Activated CD8-positive, alpha-beta T cell treated with anti-CD3 and anti-CD28 coated beads for 36 hours (primary cell): ENCODE measurements at regions of chr2 and their contacts with region 1.

Region 1: DNA sequence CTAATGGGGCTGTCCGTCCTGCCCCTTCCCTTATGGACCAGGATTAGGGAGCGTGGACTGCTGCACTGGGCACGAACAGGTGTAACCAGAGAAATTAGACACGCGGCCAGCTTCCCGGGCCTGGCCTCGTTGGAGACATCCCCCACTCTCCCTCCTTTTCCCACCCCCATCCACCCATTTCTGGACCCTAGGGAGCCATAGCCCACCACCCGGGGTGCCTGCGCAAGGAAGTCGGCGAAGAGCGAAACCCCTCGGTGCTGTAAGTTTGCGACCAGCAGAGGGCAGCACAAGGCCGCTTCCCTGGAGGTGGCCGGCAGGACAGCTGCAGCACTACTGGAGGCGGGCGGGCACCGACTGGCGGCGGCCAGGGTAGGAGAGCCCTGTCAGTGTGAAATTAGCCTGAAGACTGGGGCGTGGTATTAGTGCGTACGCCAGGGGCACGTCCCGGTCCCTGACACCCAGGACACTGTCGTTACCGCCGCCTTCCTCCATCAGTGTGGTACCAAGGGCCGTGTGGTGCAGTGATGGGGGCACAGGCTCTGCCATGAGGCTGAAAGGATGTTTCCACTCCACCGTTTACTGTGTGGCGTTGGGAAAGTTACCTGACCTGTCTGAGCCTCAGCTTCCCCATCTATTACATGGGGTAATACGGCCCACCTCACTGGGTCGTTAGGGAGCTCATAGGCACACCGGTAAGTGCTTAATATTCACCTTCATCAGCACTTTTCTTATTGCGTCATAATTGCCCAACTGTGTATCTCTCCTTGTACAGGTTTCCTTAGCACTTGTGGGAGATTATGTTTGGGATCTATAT is 36.0 kb upstream of the CD207 start:
- DNase-seq: peak; percentile 90
- ATAC-seq: peak; percentile 96
- H3K4me3 Mint-ChIP-seq: no peak overlapping the region
- H3K27ac Mint-ChIP-seq: no peak overlapping the region
- H3K4me1 Mint-ChIP-seq: no peaks in the 10 kb centered on the region
- H3K27me3 Mint-ChIP-seq: peaks cover 31% of the 10 kb centered on the region
- CTCF ChIP-seq: peak; percentile 93

Region 2: GRCh38 chr2:70371753-70372152 is 499.9 kb before region 1 on chr2:
- CTCF ChIA-PET with region 1: no interaction called
- POLR2A ChIA-PET with region 1: no interaction called
- intact Hi-C with region 1: no loop called
- DNase-seq: no peak
- ATAC-seq: no peak
- H3K4me3 Mint-ChIP-seq: no peak overlapping the region
- H3K27ac Mint-ChIP-seq: no peak overlapping the region
- H3K4me1 Mint-ChIP-seq: no peaks in the 10 kb centered on the region
- H3K27me3 Mint-ChIP-seq: no peaks in the 10 kb centered on the region
- CTCF ChIP-seq: no peak

Region 3: GRCh38 chr2:70851704-70852103 is 19.9 kb before region 1 on chr2:
- CTCF ChIA-PET with region 1: interaction called, 37 read pairs
- POLR2A ChIA-PET with region 1: interaction called, 3 read pairs
- intact Hi-C with region 1: no loop called
- DNase-seq: peak; percentile 70
- ATAC-seq: peak; percentile 98
- H3K4me3 Mint-ChIP-seq: peak overlapping the region; percentile 5
- H3K27ac Mint-ChIP-seq: peak overlapping the region; percentile 77
- H3K4me1 Mint-ChIP-seq: peaks cover 30% of the 10 kb centered on the region
- H3K27me3 Mint-ChIP-seq: no peaks in the 10 kb centered on the region
- CTCF ChIP-seq: no peak

Region 4: GRCh38 chr2:70907130-70908057 is 35.8 kb after region 1 on chr2:
- CTCF ChIA-PET with region 1: interaction called, 14 read pairs
- POLR2A ChIA-PET with region 1: interaction called, 3 read pairs
- intact Hi-C with region 1: no loop called
- DNase-seq: no peak
- ATAC-seq: no peak
- H3K4me3 Mint-ChIP-seq: peak overlapping the region; percentile 54
- H3K27ac Mint-ChIP-seq: no peak overlapping the region
- H3K4me1 Mint-ChIP-seq: peaks cover 10% of the 10 kb centered on the region
- H3K27me3 Mint-ChIP-seq: peaks cover 73% of the 10 kb centered on the region
- CTCF ChIP-seq: no peak

Region 5: DNA sequence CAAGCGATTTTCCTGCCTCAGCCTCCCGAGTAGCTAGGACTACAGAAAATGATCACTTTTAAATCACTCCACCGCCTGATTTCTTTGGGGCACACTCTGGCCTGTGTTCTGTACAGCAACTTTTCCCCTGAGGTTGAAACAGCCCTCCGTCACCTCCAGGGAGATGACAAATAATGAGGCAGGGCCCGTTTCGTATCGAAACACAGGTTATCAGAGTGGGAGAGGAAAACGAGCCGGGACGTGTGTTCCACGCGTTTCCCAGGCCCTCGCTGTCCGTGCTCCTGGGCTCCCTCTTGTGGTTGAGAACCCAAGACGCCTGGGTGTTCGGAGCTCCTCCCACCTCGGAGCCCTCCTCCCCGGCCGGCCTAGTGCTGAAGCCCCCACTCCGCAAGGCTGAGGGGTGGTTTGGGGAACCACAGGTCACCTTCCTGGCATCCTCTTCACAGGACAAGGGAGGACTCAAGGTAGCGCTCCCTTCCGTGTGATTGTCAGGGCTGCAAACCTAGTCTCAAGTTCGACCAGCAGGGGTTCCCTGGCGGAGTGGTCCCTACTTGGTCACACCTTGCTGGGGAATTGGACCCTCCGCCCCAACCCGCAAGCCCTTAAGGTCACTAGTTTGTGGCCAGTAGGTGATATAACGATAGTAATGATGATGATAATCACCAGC is 76.9 kb after region 1 on chr2:
- CTCF ChIA-PET with region 1: interaction called, 117 read pairs
- POLR2A ChIA-PET with region 1: no interaction called
- intact Hi-C with region 1: loop called (anchors 5 kb)
- DNase-seq: peak; percentile 85
- ATAC-seq: peak; percentile 96
- H3K4me3 Mint-ChIP-seq: peak overlapping the region; percentile 74
- H3K27ac Mint-ChIP-seq: peak overlapping the region; percentile 51
- H3K4me1 Mint-ChIP-seq: peaks cover 6% of the 10 kb centered on the region
- H3K27me3 Mint-ChIP-seq: peaks cover 10% of the 10 kb centered on the region
- CTCF ChIP-seq: peak; percentile 88

Region 6: GRCh38 chr2:70964596-70965386 is 93.2 kb after region 1 on chr2:
- CTCF ChIA-PET with region 1: interaction called, 12 read pairs
- POLR2A ChIA-PET with region 1: no interaction called
- intact Hi-C with region 1: no loop called
- DNase-seq: peak; percentile 89
- ATAC-seq: peak; percentile 97
- H3K4me3 Mint-ChIP-seq: peak overlapping the region; percentile 77
- H3K27ac Mint-ChIP-seq: no peak overlapping the region
- H3K4me1 Mint-ChIP-seq: peaks cover 3% of the 10 kb centered on the region
- H3K27me3 Mint-ChIP-seq: peaks cover 18% of the 10 kb centered on the region
- CTCF ChIP-seq: peak; percentile 93

Region 7: GRCh38 chr2:71043531-71044407 is 172.2 kb after region 1 on chr2:
- CTCF ChIA-PET with region 1: no interaction called
- POLR2A ChIA-PET with region 1: no interaction called
- intact Hi-C with region 1: no loop called
- DNase-seq: peak; percentile 31
- ATAC-seq: peak; percentile 69
- H3K4me3 Mint-ChIP-seq: no peak overlapping the region
- H3K27ac Mint-ChIP-seq: no peak overlapping the region
- H3K4me1 Mint-ChIP-seq: no peaks in the 10 kb centered on the region
- H3K27me3 Mint-ChIP-seq: peaks cover 6% of the 10 kb centered on the region
- CTCF ChIP-seq: no peak

Region 8: GRCh38 chr2:71060871-71061270 is 189.3 kb after region 1 on chr2:
- CTCF ChIA-PET with region 1: no interaction called
- POLR2A ChIA-PET with region 1: no interaction called
- intact Hi-C with region 1: no loop called
- DNase-seq: no peak
- ATAC-seq: no peak
- H3K4me3 Mint-ChIP-seq: no peak overlapping the region
- H3K27ac Mint-ChIP-seq: no peak overlapping the region
- H3K4me1 Mint-ChIP-seq: no peaks in the 10 kb centered on the region
- H3K27me3 Mint-ChIP-seq: no peaks in the 10 kb centered on the region
- CTCF ChIP-seq: no peak